ENCODE measurements at regions of chr14 and their contacts with region 1.

Region 1: DNA sequence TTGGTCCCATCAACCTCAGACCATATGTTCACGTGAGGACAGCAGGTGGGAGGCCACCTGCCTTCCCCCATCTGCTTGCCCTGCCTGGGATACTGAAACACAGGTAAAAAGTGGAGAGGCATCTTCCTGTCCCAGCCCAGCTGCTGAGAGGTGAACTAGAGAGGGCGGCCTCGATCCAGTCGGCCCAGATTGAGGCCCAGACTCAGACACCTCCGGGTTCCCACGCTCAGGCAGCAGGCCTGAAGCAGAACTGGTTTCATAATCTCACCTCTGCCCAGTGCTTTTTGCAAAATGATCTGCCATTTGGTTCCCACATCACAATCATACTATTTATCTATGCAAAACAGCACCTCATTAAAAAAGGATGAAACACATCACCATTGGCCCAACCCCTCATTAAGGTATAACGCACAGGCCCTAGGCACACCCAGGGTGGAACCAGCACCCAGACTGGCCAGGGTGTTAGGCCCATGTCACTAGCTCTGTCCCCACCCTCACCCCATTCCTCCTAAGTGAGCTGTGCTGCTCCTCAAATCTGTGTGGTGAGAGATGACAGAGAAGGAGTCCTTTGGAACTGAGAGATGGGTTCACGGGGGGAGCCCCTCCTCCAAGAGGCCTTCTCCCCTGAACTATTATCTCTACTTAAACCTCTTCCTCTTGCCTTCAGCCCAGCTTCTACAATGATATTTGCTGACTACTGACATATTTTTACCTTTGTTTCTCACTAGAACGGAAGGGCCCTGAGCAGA is 81.1 kb downstream of the ZFP36L1 start:
- DNase-seq: peak in 2 of 9 experiments; percentile 49 to 63
- ATAC-seq: peak; percentile 44
- H3K4me3 ChIP-seq: no peak overlapping the region
- H3K4me3 Mint-ChIP-seq: no peak overlapping the region
- H3K27ac ChIP-seq: peak overlapping the region in 1 of 2 experiments; percentile 62
- H3K27ac Mint-ChIP-seq: peak overlapping the region; percentile 87
- H3K4me1 ChIP-seq: peaks cover 16% of the 10 kb centered on the region
- H3K4me1 Mint-ChIP-seq: peaks cover 35% of the 10 kb centered on the region
- H3K27me3 ChIP-seq: no peaks in the 10 kb centered on the region
- H3K27me3 Mint-ChIP-seq: no peaks in the 10 kb centered on the region
- CTCF ChIP-seq: no peak

Region 2: GRCh38 chr14:68663385-68664076 is 48.2 kb before region 1 on chr14:
- CTCF ChIA-PET with region 1: no interaction called
- POLR2A ChIA-PET with region 1: no interaction called
- intact Hi-C with region 1: loop called in 1 of 2 experiments (anchors 2 kb)
- DNase-seq: peak in 5 of 9 experiments; percentile 12 to 65 (median 47)
- ATAC-seq: peak; percentile 70
- H3K4me3 ChIP-seq: peak overlapping the region in 1 of 2 experiments; percentile 40
- H3K4me3 Mint-ChIP-seq: peak overlapping the region; percentile 77
- H3K27ac ChIP-seq: peak overlapping the region in 1 of 2 experiments; percentile 69
- H3K27ac Mint-ChIP-seq: peak overlapping the region; percentile 82
- H3K4me1 ChIP-seq: peaks cover 18% of the 10 kb centered on the region
- H3K4me1 Mint-ChIP-seq: peaks cover 24% of the 10 kb centered on the region
- H3K27me3 ChIP-seq: no peaks in the 10 kb centered on the region
- H3K27me3 Mint-ChIP-seq: no peaks in the 10 kb centered on the region
- CTCF ChIP-seq: no peak

Region 3: GRCh38 chr14:68695326-68695768 is 16.4 kb before region 1 on chr14:
- CTCF ChIA-PET with region 1: no interaction called
- POLR2A ChIA-PET with region 1: no interaction called
- intact Hi-C with region 1: no loop called
- DNase-seq: peak in 3 of 9 experiments; percentile 30 to 53 (median 53)
- ATAC-seq: peak; percentile 52
- H3K4me3 ChIP-seq: no peak overlapping the region
- H3K4me3 Mint-ChIP-seq: no peak overlapping the region
- H3K27ac ChIP-seq: no peak overlapping the region
- H3K27ac Mint-ChIP-seq: peak overlapping the region; percentile 29
- H3K4me1 ChIP-seq: no peaks in the 10 kb centered on the region
- H3K4me1 Mint-ChIP-seq: peaks cover 22% of the 10 kb centered on the region
- H3K27me3 ChIP-seq: no peaks in the 10 kb centered on the region
- H3K27me3 Mint-ChIP-seq: no peaks in the 10 kb centered on the region
- CTCF ChIP-seq: no peak